Right cardiac atrium (tissue), 5 donors: ENCODE measurements at regions of chr15 and their contacts with region 1.

Region 1: GRCh38 chr15:83559310-83559966 is 94.5 kb upstream of the ADAMTSL3 start:
- DNase-seq: peak; percentile 35 to 54 (median 52)
- ATAC-seq: peak; percentile 79 to 83
- H3K4me3 ChIP-seq: no peak overlapping the region
- H3K27ac ChIP-seq: no peak overlapping the region
- H3K4me1 ChIP-seq: no peaks in the 10 kb centered on the region
- H3K27me3 ChIP-seq: no peaks in the 10 kb centered on the region

Region 2: GRCh38 chr15:83436458-83437158 is 122.8 kb before region 1 on chr15:
- intact Hi-C with region 1: loop called (anchors 2 to 5 kb)
- DNase-seq: no peak
- ATAC-seq: peak in 1 of 2 donors; percentile 53
- H3K4me3 ChIP-seq: no peak overlapping the region
- H3K27ac ChIP-seq: no peak overlapping the region
- H3K4me1 ChIP-seq: no peaks in the 10 kb centered on the region
- H3K27me3 ChIP-seq: no peaks in the 10 kb centered on the region

Region 3: DNA sequence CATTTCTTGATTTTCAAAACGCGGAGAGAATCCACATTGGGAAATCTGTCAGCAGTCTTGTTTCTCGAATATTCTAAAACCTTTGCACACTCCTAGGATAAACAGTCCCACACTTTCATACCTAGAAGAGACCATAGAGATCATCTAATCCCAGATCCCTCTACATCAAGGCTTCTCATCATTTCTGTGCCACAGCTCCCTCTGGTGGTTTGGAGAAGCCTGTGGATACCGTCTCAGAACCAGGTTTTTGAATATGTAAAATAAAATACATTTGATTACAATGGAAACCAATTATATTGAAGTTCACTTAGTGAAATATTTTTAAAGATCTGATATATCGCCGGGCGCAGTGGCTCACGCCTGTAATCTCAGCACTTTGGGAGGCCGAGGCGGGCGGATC is 464.2 kb after region 1 on chr15:
- intact Hi-C with region 1: loop called in 1 of 4 experiments (anchors 10 kb)
- DNase-seq: peak in 2 of 3 donors; percentile 28 to 50
- ATAC-seq: no peak
- H3K4me3 ChIP-seq: no peak overlapping the region
- H3K27ac ChIP-seq: no peak overlapping the region
- H3K4me1 ChIP-seq: no peaks in the 10 kb centered on the region
- H3K27me3 ChIP-seq: no peaks in the 10 kb centered on the region

Region 4: GRCh38 chr15:84035399-84035766 is 475.9 kb after region 1 on chr15:
- intact Hi-C with region 1: loop called in 1 of 4 experiments (anchors 10 kb)
- DNase-seq: no peak
- ATAC-seq: peak; percentile 53 to 55
- H3K4me3 ChIP-seq: no peak overlapping the region
- H3K27ac ChIP-seq: no peak overlapping the region
- H3K4me1 ChIP-seq: no peaks in the 10 kb centered on the region
- H3K27me3 ChIP-seq: no peaks in the 10 kb centered on the region